HepG2 (cell line): ENCODE measurements at regions of chr4 and their contacts with region 1.

Region 1: GRCh38 chr4:45841791-45842190 is 282.1 kb downstream of the GABRG1 start:
- DNase-seq: no peak
- ATAC-seq: no peak
- H3K4me3 ChIP-seq: no peak overlapping the region
- H3K27ac ChIP-seq: no peak overlapping the region
- H3K4me1 ChIP-seq: no peaks in the 10 kb centered on the region
- H3K27me3 ChIP-seq: no peaks in the 10 kb centered on the region
- CTCF ChIP-seq: no peak
- EP300 ChIP-seq: no peak
- POLR2A ChIP-seq: no peak
- RAD21 ChIP-seq: no peak

Region 2: GRCh38 chr4:44817930-44818329 is 1023.9 kb before region 1 on chr4:
- CTCF ChIA-PET with region 1: no interaction called
- POLR2A ChIA-PET with region 1: no interaction called
- in situ Hi-C with region 1: no loop called
- intact Hi-C with region 1: loop called (anchors 5 kb)
- DNase-seq: no peak
- ATAC-seq: no peak
- H3K4me3 ChIP-seq: no peak overlapping the region
- H3K27ac ChIP-seq: no peak overlapping the region
- H3K4me1 ChIP-seq: no peaks in the 10 kb centered on the region
- H3K27me3 ChIP-seq: no peaks in the 10 kb centered on the region
- CTCF ChIP-seq: no peak
- EP300 ChIP-seq: no peak
- POLR2A ChIP-seq: no peak
- RAD21 ChIP-seq: no peak

Region 3: GRCh38 chr4:45804006-45804405 is 37.8 kb before region 1 on chr4:
- CTCF ChIA-PET with region 1: no interaction called
- POLR2A ChIA-PET with region 1: no interaction called
- in situ Hi-C with region 1: no loop called
- intact Hi-C with region 1: no loop called
- DNase-seq: no peak
- ATAC-seq: no peak
- H3K4me3 ChIP-seq: no peak overlapping the region
- H3K27ac ChIP-seq: no peak overlapping the region
- H3K4me1 ChIP-seq: no peaks in the 10 kb centered on the region
- H3K27me3 ChIP-seq: no peaks in the 10 kb centered on the region
- CTCF ChIP-seq: no peak
- EP300 ChIP-seq: no peak
- POLR2A ChIP-seq: no peak
- RAD21 ChIP-seq: no peak